A673 (cell line): ENCODE measurements at regions of chr6 and their contacts with region 1.

Region 1: GRCh38 chr6:2103644-2104523 is 141.5 kb downstream of the GMDS start:
- DNase-seq: peak; percentile 60
- H3K4me3 ChIP-seq: no peak overlapping the region
- H3K27ac ChIP-seq: no peak overlapping the region
- H3K4me1 ChIP-seq: peaks cover 7% of the 10 kb centered on the region
- H3K27me3 ChIP-seq: no peaks in the 10 kb centered on the region
- CTCF ChIP-seq: peak; percentile 68

Region 2: GRCh38 chr6:1624851-1625781 is 478.8 kb before region 1 on chr6:
- CTCF ChIA-PET with region 1: interaction called, 11 read pairs
- POLR2A ChIA-PET with region 1: no interaction called
- intact Hi-C with region 1: no loop called
- DNase-seq: peak; percentile 54
- H3K4me3 ChIP-seq: peak overlapping the region; percentile 54
- H3K27ac ChIP-seq: no peak overlapping the region
- H3K4me1 ChIP-seq: peaks cover 14% of the 10 kb centered on the region
- H3K27me3 ChIP-seq: peaks cover 64% of the 10 kb centered on the region
- CTCF ChIP-seq: no peak

Region 3: DNA sequence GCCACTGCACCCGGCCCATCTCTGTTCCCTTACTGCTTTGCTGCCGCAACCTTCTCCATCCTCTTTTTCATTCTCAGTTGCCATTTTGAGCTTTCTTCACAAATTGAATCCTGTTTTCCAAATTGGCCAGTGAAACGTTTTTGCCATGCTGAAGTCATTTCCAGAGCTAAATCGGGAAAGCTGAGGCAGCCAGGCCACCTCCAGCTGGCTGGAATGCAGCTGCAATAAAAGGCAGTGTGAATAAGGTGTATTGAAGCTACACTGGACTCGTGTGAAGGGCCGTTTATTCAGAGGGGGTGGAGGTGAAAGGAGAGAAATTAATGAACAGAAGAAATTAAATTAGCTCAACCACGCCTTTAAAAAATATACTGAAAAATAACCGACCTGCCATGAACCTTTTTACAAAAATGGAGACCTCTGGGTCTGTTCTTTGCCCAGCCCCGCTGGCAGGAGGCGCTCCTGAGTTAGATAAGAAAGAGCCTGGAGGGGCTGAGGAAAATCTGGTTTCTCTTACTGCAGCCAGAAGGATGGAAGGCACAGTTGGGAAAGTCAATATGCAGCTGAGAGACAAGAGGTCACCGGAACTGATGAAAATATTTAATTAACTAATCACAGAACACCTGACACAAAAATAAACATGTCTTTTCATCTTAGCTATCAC is 210.3 kb before region 1 on chr6:
- CTCF ChIA-PET with region 1: no interaction called
- POLR2A ChIA-PET with region 1: no interaction called
- intact Hi-C with region 1: loop called (anchors 10 kb)
- DNase-seq: peak; percentile 21
- H3K4me3 ChIP-seq: no peak overlapping the region
- H3K27ac ChIP-seq: no peak overlapping the region
- H3K4me1 ChIP-seq: no peaks in the 10 kb centered on the region
- H3K27me3 ChIP-seq: no peaks in the 10 kb centered on the region
- CTCF ChIP-seq: peak; percentile 42